ENCODE measurements at regions of chr2 and their contacts with region 1.

Region 1: GRCh38 chr2:10267551-10268465 is 34.9 kb upstream of the HPCAL1 start:
- DNase-seq: no peak
- H3K4me3 ChIP-seq: no peak overlapping the region
- H3K27ac ChIP-seq: no peak overlapping the region
- H3K4me1 ChIP-seq: peaks cover 3% of the 10 kb centered on the region
- H3K27me3 ChIP-seq: no peaks in the 10 kb centered on the region
- CTCF ChIP-seq: no peak
- POLR2A ChIP-seq: no peak

Region 2: GRCh38 chr2:10331027-10331701 is 63.4 kb after region 1 on chr2:
- CTCF ChIA-PET with region 1: no interaction called
- POLR2A ChIA-PET with region 1: no interaction called
- dilution Hi-C with region 1: no loop called
- intact Hi-C with region 1: loop called (anchors 2 kb)
- DNase-seq: peak; percentile 49
- H3K4me3 ChIP-seq: peak overlapping the region in 1 of 3 experiments; percentile 20
- H3K27ac ChIP-seq: peak overlapping the region; percentile 88
- H3K4me1 ChIP-seq: peaks cover 51% of the 10 kb centered on the region
- H3K27me3 ChIP-seq: no peaks in the 10 kb centered on the region
- CTCF ChIP-seq: peak in 1 of 2 donors; percentile 9
- POLR2A ChIP-seq: no peak

Region 3: DNA sequence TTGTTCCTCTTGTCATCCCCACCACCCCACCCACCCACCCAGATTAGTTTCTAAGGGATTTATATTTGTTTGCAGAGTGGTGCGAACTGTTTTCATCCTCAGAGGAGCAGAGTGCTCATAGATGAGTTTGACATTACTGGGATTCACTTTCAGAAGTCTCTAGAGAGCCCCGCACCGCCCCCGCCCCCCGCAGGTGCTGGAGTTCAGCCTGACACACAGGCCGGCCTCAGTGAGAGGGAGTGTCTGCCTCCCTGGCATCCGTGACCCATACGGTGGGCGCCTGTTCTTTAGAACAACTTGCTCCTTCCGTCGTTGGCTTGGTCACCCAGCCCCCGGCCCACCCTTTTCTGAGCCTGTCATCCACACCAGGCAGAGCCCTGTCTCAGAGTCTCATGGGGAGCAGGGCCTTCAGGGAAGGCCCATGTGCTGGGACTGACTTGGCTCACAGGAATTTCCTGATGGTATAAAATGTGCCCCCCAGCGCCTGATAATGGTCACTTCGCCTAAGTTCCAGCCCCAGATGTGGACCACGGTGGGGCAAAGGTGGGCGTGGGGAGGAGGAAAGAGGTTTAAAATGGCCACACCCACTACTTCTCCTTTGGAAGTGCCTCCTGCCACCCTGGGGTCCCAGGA is 79.2 kb after region 1 on chr2:
- CTCF ChIA-PET with region 1: no interaction called
- POLR2A ChIA-PET with region 1: no interaction called
- dilution Hi-C with region 1: no loop called
- intact Hi-C with region 1: loop called (anchors 1 kb)
- DNase-seq: peak; percentile 23
- H3K4me3 ChIP-seq: no peak overlapping the region
- H3K27ac ChIP-seq: peak overlapping the region; percentile 46
- H3K4me1 ChIP-seq: peaks cover 31% of the 10 kb centered on the region
- H3K27me3 ChIP-seq: no peaks in the 10 kb centered on the region
- CTCF ChIP-seq: peak in 1 of 2 donors; percentile 15
- POLR2A ChIP-seq: no peak

Measured in endothelial cell of umbilical vein (primary cell).